ENCODE measurements at regions of chr2 and their contacts with region 1.

Region 1: GRCh38 chr2:85772019-85772745 is 18.4 kb downstream of the ATOH8 start:
- DNase-seq: peak; percentile 98 to 99 (median 99)
- ATAC-seq: peak; percentile 92
- H3K4me3 ChIP-seq: peak overlapping the region in 10 of 12 donors; percentile 3 to 41 (median 28)
- H3K27ac ChIP-seq: peak overlapping the region; percentile 73 to 95 (median 91)
- H3K4me1 ChIP-seq: peaks cover 59 to 96% (median 90%) of the 10 kb centered on the region in 12 donors
- H3K27me3 ChIP-seq: no peaks in the 10 kb centered on the region
- CTCF ChIP-seq: peak in 8 of 12 donors; percentile 18 to 48 (median 24)
- POLR2A ChIP-seq: peak in 1 of 2 donors; percentile 45

Region 2: GRCh38 chr2:85737481-85737880 is 34.7 kb before region 1 on chr2:
- intact Hi-C with region 1: loop called in 1 of 10 experiments (anchors 5 kb)
- DNase-seq: peak in 4 of 5 donors; percentile 72 to 78 (median 73)
- ATAC-seq: peak; percentile 44 to 69 (median 60)
- H3K4me3 ChIP-seq: no peak overlapping the region
- H3K27ac ChIP-seq: peak overlapping the region in 9 of 12 donors; percentile 31 to 69 (median 56)
- H3K4me1 ChIP-seq: peaks cover 0 to 66% (median 33%) of the 10 kb centered on the region in 12 donors
- H3K27me3 ChIP-seq: no peaks in the 10 kb centered on the region
- CTCF ChIP-seq: no peak
- POLR2A ChIP-seq: no peak

Region 3: GRCh38 chr2:85792783-85793441 is 20.7 kb after region 1 on chr2:
- intact Hi-C with region 1: loop called in 3 of 10 experiments (anchors 2 kb)
- DNase-seq: peak in 2 of 5 donors; percentile 36 to 57
- ATAC-seq: peak in 1 of 4 donors; percentile 19
- H3K4me3 ChIP-seq: no peak overlapping the region
- H3K27ac ChIP-seq: peak overlapping the region in 10 of 12 donors; percentile 21 to 80 (median 30)
- H3K4me1 ChIP-seq: peaks cover 17 to 76% (median 63%) of the 10 kb centered on the region in 12 donors
- H3K27me3 ChIP-seq: no peaks in the 10 kb centered on the region
- CTCF ChIP-seq: no peak
- POLR2A ChIP-seq: no peak